ENCODE measurements at regions of chr3 and their contacts with region 1.

Region 1: GRCh38 chr3:25427942-25428788 is at the start of gene RARB:
- DNase-seq: peak; percentile 59 to 84
- ATAC-seq: peak; percentile 91 to 95 (median 92)
- H3K4me3 ChIP-seq: peak within 1 kb of the TSS; percentile 56 to 81 (median 65)
- H3K27ac ChIP-seq: peak within 1 kb of the TSS; percentile 79 to 97 (median 94)
- H3K4me1 ChIP-seq: peaks cover 2 to 26% (median 15%) of the 10 kb centered on the region in 9 donors
- H3K27me3 ChIP-seq: peaks cover 0 to 32% (median 0%) of the 10 kb centered on the region in 7 donors
- CTCF ChIP-seq: no peak
- total RNA-seq, gene RARB: 8.6 to 23.2 (median 19.0) TPM

Region 2: GRCh38 chr3:24963762-24964625 is 464.2 kb before region 1 on chr3:
- intact Hi-C with region 1: loop called in 3 of 10 experiments (anchors 10 kb)
- DNase-seq: no peak
- ATAC-seq: peak in 1 of 8 donors; percentile 61
- H3K4me3 ChIP-seq: no peak overlapping the region
- H3K27ac ChIP-seq: no peak overlapping the region
- H3K4me1 ChIP-seq: no peaks in the 10 kb centered on the region
- H3K27me3 ChIP-seq: no peaks in the 10 kb centered on the region
- CTCF ChIP-seq: peak in 8 of 9 donors; percentile 44 to 71 (median 64)

Region 3: DNA sequence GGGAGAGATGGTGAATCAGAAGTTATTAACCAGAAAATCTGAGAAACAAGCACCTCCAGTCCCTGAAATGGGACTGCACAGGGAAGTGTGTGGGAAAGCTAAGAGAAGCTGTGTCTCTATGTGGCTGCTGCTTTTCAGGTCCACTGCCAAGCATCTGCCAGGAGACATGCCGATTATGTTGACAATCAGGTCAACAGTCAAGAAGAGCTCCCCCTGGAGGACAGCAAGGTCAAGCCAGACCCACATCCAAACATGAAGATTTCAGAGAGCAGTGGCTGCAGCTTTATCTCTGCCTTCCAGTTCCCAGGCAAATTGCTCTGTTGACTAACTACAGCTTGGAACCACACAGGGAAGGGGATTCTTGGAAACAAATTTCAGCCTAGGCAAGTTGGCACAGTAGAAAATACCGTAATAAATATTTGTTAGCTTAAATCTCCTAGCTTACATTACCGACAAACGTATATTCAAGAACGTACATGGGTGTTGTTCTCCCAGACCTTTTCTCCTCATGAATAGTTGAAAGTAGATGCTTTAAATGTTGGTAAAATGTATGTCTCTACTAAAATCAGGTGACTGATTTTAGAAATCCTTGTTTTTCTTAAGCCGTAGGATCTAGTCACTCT is 394.6 kb before region 1 on chr3:
- intact Hi-C with region 1: loop called in 3 of 10 experiments (anchors 5 to 10 kb)
- DNase-seq: peak; percentile 17 to 65
- ATAC-seq: peak; percentile 62 to 90 (median 74)
- H3K4me3 ChIP-seq: no peak overlapping the region
- H3K27ac ChIP-seq: no peak overlapping the region
- H3K4me1 ChIP-seq: peaks cover 0 to 27% (median 12%) of the 10 kb centered on the region in 9 donors
- H3K27me3 ChIP-seq: no peaks in the 10 kb centered on the region
- CTCF ChIP-seq: peak; percentile 49 to 73 (median 64)

Region 4: GRCh38 chr3:25156626-25157025 is 271.5 kb before region 1 on chr3:
- intact Hi-C with region 1: loop called in 1 of 10 experiments (anchors 10 kb)
- DNase-seq: peak in 1 of 2 donors; percentile 5
- ATAC-seq: peak; percentile 62 to 97 (median 83)
- H3K4me3 ChIP-seq: no peak overlapping the region
- H3K27ac ChIP-seq: peak overlapping the region in 4 of 10 donors; percentile 25 to 46 (median 32)
- H3K4me1 ChIP-seq: peaks cover 0 to 21% (median 7%) of the 10 kb centered on the region in 9 donors
- H3K27me3 ChIP-seq: no peaks in the 10 kb centered on the region
- CTCF ChIP-seq: no peak

Region 5: GRCh38 chr3:25468866-25469319 is 40.7 kb after region 1 on chr3:
- intact Hi-C with region 1: loop called in 5 of 10 experiments (anchors 5 kb)
- DNase-seq: peak; percentile 70 to 72
- ATAC-seq: peak; percentile 84 to 92 (median 87)
- H3K4me3 ChIP-seq: no peak overlapping the region
- H3K27ac ChIP-seq: peak overlapping the region in 7 of 10 donors; percentile 71 to 85 (median 79)
- H3K4me1 ChIP-seq: peaks cover 16 to 83% (median 60%) of the 10 kb centered on the region in 9 donors
- H3K27me3 ChIP-seq: no peaks in the 10 kb centered on the region
- CTCF ChIP-seq: peak in 8 of 9 donors; percentile 9 to 52 (median 38)